Mucosa of descending colon (tissue), 3 donors: ENCODE measurements at regions of chr4 and their contacts with region 1.

Region 1: DNA sequence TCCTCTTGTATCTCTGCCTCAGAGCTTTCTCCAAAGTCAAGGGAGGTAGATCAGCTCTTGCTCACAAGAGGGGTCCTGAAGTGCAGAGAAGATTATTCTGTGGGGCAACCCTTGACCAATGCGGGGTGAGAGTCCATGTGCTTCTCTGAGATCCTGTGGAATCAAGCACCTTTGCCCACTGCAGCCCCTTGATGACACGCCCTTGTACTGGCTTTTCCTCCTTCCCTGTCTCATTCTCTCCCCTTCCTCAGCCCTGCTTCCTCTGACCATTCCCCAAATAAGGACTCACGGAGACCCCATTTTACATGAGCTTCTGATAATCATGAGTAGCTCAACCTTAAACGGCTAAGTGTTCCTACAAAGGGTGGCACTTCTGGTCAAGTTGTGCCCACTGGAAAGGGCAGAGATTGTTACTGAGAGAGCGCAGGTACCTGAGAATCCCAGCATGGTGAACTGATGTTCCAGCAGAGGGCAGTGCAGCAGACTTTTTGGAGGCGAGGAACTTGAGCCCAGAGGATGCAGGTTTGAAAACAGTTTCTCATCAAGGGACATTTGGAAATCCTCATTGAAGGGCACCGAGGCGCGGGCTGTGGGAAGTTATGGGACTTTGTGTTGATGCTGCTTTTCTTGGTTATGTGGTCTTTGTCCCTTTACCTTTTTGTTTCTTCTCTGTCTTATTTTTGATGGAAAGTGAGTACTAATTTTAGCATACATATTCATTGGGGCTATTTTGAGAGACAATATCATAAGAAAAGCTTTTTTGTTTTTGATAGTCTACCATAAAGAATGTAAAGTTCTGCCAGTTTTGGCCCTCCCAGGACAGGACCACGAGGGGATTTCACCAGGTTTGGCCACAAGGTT is 201.3 kb downstream of the RBM46 start:
- DNase-seq: peak in 2 of 3 donors; percentile 55 to 76
- ATAC-seq: peak; percentile 55
- H3K4me3 ChIP-seq: no peak overlapping the region
- H3K4me1 ChIP-seq: no peaks in the 10 kb centered on the region
- CTCF ChIP-seq: peak; percentile 21

Region 2: GRCh38 chr4:155353923-155354540 is 371.6 kb after region 1 on chr4:
- intact Hi-C with region 1: loop called in 1 of 2 experiments (anchors 5 kb)
- DNase-seq: peak in 2 of 3 donors; percentile 69 to 87
- ATAC-seq: peak; percentile 81
- H3K4me3 ChIP-seq: no peak overlapping the region
- H3K4me1 ChIP-seq: no peaks in the 10 kb centered on the region
- CTCF ChIP-seq: peak; percentile 45